ENCODE measurements at regions of chr22 and their contacts with region 1.

Region 1: GRCh38 chr22:50030297-50031188 is 18.0 kb upstream of the IL17REL start:
- DNase-seq: peak; percentile 83
- ATAC-seq: peak; percentile 94

Region 2: DNA sequence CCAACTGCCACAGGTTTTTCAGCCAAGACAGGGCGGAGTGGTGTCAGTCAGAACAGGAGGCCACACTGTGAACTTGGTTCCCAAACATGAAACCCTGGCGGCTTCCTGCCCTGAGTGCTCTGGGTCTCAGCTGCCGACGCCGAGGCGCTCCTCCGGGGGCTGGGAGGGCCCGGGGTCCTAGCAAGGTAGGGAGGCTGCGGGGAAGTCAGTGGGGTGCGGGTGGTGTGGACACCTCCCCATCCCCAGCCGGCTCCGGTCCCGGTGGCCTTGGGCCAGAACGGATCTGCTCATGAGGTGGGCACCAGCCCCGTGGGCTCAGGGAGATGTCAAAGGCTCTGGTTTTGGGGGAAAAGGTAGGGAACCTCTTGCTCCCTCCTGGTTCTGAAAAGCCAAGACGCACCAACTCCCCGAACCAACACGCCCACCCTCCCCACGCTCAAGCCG is 259.7 kb before region 1 on chr22:
- intact Hi-C with region 1: loop called (anchors 10 kb)
- DNase-seq: no peak
- ATAC-seq: no peak

Measured in Right ventricle myocardium superior (tissue), 1 donor.